Caco-2 (cell line): ENCODE measurements at regions of chr17 and their contacts with region 1.

Region 1: GRCh38 chr17:49899191-49899485 is 51.3 kb upstream of the TAC4 start:
- DNase-seq: peak; percentile 88 to 92
- H3K4me3 ChIP-seq: no peak overlapping the region
- H3K4me3 Mint-ChIP-seq: no peak overlapping the region
- H3K27ac Mint-ChIP-seq: peak overlapping the region; percentile 58
- H3K4me1 ChIP-seq: peaks cover 83% of the 10 kb centered on the region
- H3K4me1 Mint-ChIP-seq: peaks cover 60% of the 10 kb centered on the region
- H3K27me3 ChIP-seq: no peaks in the 10 kb centered on the region
- H3K27me3 Mint-ChIP-seq: no peaks in the 10 kb centered on the region
- CTCF ChIP-seq: peak; percentile 83 to 95

Region 2: DNA sequence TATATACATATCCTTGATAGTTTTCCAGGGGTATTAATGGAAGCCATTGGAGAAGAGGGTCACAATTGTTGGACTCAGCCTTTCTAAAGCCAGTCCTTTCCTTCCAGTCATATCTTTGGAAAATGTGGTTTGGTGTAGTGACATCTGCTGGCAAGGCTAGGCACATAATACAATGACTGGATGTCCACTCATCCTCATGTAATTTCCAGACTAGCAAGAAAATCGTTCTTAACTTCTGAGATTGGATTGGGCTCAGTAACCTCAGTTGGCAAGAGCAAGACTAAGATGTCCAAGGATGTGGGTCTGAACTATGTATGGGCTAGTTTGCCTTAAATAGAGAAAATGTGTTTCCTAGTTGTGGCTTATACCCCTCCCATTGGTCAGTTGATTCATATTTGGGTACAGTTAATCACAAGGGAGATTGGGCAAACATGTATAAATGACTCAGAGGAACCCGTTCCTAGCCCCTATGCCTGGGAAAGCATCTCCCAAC is 119.4 kb before region 1 on chr17:
- CTCF ChIA-PET with region 1: no interaction called
- POLR2A ChIA-PET with region 1: no interaction called
- intact Hi-C with region 1: no loop called
- DNase-seq: peak in 1 of 2 experiments; percentile 71
- H3K4me3 ChIP-seq: no peak overlapping the region
- H3K4me3 Mint-ChIP-seq: no peak overlapping the region
- H3K27ac Mint-ChIP-seq: no peak overlapping the region
- H3K4me1 ChIP-seq: peaks cover 4% of the 10 kb centered on the region; the same call in 1 of the 2 replicates
- H3K4me1 Mint-ChIP-seq: no peaks in the 10 kb centered on the region
- H3K27me3 ChIP-seq: no peaks in the 10 kb centered on the region
- H3K27me3 Mint-ChIP-seq: peaks cover 20% of the 10 kb centered on the region
- CTCF ChIP-seq: peak; percentile 91 to 94

Region 3: GRCh38 chr17:49880291-49881053 is 18.7 kb before region 1 on chr17:
- CTCF ChIA-PET with region 1: interaction called, 8 read pairs
- POLR2A ChIA-PET with region 1: no interaction called
- intact Hi-C with region 1: loop called (anchors 1 kb)
- DNase-seq: peak; percentile 98 to 100
- H3K4me3 ChIP-seq: peak overlapping the region; percentile 4; the same call in 1 of the 2 replicates
- H3K4me3 Mint-ChIP-seq: peak overlapping the region; percentile 63
- H3K27ac Mint-ChIP-seq: peak overlapping the region; percentile 83
- H3K4me1 ChIP-seq: peaks cover 57% of the 10 kb centered on the region
- H3K4me1 Mint-ChIP-seq: peaks cover 39% of the 10 kb centered on the region
- H3K27me3 ChIP-seq: no peaks in the 10 kb centered on the region
- H3K27me3 Mint-ChIP-seq: no peaks in the 10 kb centered on the region
- CTCF ChIP-seq: peak; percentile 100

Region 4: GRCh38 chr17:49910094-49910857 is 11.1 kb after region 1 on chr17:
- CTCF ChIA-PET with region 1: interaction called, 25 read pairs
- POLR2A ChIA-PET with region 1: interaction called, 5 read pairs
- intact Hi-C with region 1: loop called (anchors 1 kb)
- DNase-seq: no peak
- H3K4me3 ChIP-seq: no peak overlapping the region
- H3K4me3 Mint-ChIP-seq: no peak overlapping the region
- H3K27ac Mint-ChIP-seq: no peak overlapping the region
- H3K4me1 ChIP-seq: peaks cover 22% of the 10 kb centered on the region
- H3K4me1 Mint-ChIP-seq: peaks cover 26% of the 10 kb centered on the region
- H3K27me3 ChIP-seq: no peaks in the 10 kb centered on the region
- H3K27me3 Mint-ChIP-seq: no peaks in the 10 kb centered on the region
- CTCF ChIP-seq: no peak

Region 5: DNA sequence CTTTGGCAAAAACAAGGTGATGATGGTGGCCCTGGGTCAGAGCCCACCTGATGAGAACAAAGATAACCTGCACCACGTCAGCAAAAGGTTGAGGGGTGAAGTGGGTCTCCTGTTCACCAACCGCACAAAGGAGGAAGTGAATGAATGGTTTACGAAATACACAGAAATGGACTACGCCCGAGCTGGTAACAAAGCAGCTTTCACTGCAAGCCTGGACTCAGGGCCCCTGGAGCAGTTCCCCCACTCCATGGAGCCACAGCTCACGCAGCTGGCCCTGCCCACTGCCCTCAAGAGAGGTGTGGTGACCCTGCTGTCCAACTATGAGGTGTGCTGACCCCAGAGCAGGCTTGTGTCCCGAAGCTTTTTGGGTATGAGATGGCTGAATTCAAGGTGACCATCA is 40.2 kb after region 1 on chr17:
- CTCF ChIA-PET with region 1: interaction called, 14 read pairs
- POLR2A ChIA-PET with region 1: no interaction called
- intact Hi-C with region 1: no loop called
- DNase-seq: no peak
- H3K4me3 ChIP-seq: no peak overlapping the region
- H3K4me3 Mint-ChIP-seq: no peak overlapping the region
- H3K27ac Mint-ChIP-seq: no peak overlapping the region
- H3K4me1 ChIP-seq: peaks cover 35% of the 10 kb centered on the region
- H3K4me1 Mint-ChIP-seq: peaks cover 21% of the 10 kb centered on the region
- H3K27me3 ChIP-seq: no peaks in the 10 kb centered on the region
- H3K27me3 Mint-ChIP-seq: no peaks in the 10 kb centered on the region
- CTCF ChIP-seq: no peak

Region 6: GRCh38 chr17:49997791-49998703 is 98.9 kb after region 1 on chr17:
- CTCF ChIA-PET with region 1: interaction called, 24 read pairs
- POLR2A ChIA-PET with region 1: no interaction called
- intact Hi-C with region 1: no loop called
- DNase-seq: peak; percentile 76 to 82
- H3K4me3 ChIP-seq: no peak overlapping the region
- H3K4me3 Mint-ChIP-seq: peak overlapping the region; percentile 31
- H3K27ac Mint-ChIP-seq: no peak overlapping the region
- H3K4me1 ChIP-seq: no peaks in the 10 kb centered on the region
- H3K4me1 Mint-ChIP-seq: peaks cover 14% of the 10 kb centered on the region
- H3K27me3 ChIP-seq: no peaks in the 10 kb centered on the region
- H3K27me3 Mint-ChIP-seq: peaks cover 14% of the 10 kb centered on the region
- CTCF ChIP-seq: peak; percentile 63 to 72